ENCODE measurements at regions of chr7 and their contacts with region 1.

Region 1: GRCh38 chr7:152463709-152464311 is 28.0 kb upstream of the KMT2C start:
- DNase-seq: peak; percentile 94 to 100
- H3K4me3 ChIP-seq: peak overlapping the region; percentile 84
- H3K27ac ChIP-seq: peak overlapping the region; percentile 64
- H3K4me1 ChIP-seq: peaks cover 15% of the 10 kb centered on the region
- H3K27me3 ChIP-seq: no peaks in the 10 kb centered on the region
- CTCF ChIP-seq: no peak

Region 2: GRCh38 chr7:152436111-152436930 is 27.5 kb before region 1 on chr7:
- CTCF ChIA-PET with region 1: no interaction called
- POLR2A ChIA-PET with region 1: no interaction called
- intact Hi-C with region 1: loop called (anchors 1 kb)
- DNase-seq: peak; percentile 75 to 96
- H3K4me3 ChIP-seq: peak overlapping the region; percentile 67
- H3K27ac ChIP-seq: peak overlapping the region; percentile 50
- H3K4me1 ChIP-seq: peaks cover 26% of the 10 kb centered on the region
- H3K27me3 ChIP-seq: no peaks in the 10 kb centered on the region
- CTCF ChIP-seq: no peak

Region 3: GRCh38 chr7:152504367-152504766 is 40.6 kb after region 1 on chr7:
- CTCF ChIA-PET with region 1: no interaction called
- POLR2A ChIA-PET with region 1: no interaction called
- intact Hi-C with region 1: no loop called
- DNase-seq: peak; percentile 74 to 82
- H3K4me3 ChIP-seq: no peak overlapping the region
- H3K27ac ChIP-seq: peak overlapping the region; percentile 79
- H3K4me1 ChIP-seq: peaks cover 27% of the 10 kb centered on the region
- H3K27me3 ChIP-seq: no peaks in the 10 kb centered on the region
- CTCF ChIP-seq: no peak

Region 4: GRCh38 chr7:152543799-152544198 is 80.0 kb after region 1 on chr7:
- CTCF ChIA-PET with region 1: no interaction called
- POLR2A ChIA-PET with region 1: no interaction called
- intact Hi-C with region 1: loop called (anchors 1 kb)
- DNase-seq: no peak
- H3K4me3 ChIP-seq: no peak overlapping the region
- H3K27ac ChIP-seq: no peak overlapping the region
- H3K4me1 ChIP-seq: peaks cover 12% of the 10 kb centered on the region
- H3K27me3 ChIP-seq: no peaks in the 10 kb centered on the region
- CTCF ChIP-seq: no peak

Region 5: GRCh38 chr7:152588350-152588749 is 124.5 kb after region 1 on chr7:
- CTCF ChIA-PET with region 1: no interaction called
- POLR2A ChIA-PET with region 1: no interaction called
- intact Hi-C with region 1: loop called (anchors 2 kb)
- DNase-seq: peak; percentile 61 to 88
- H3K4me3 ChIP-seq: no peak overlapping the region
- H3K27ac ChIP-seq: no peak overlapping the region
- H3K4me1 ChIP-seq: peaks cover 14% of the 10 kb centered on the region
- H3K27me3 ChIP-seq: no peaks in the 10 kb centered on the region
- CTCF ChIP-seq: no peak

Region 6: DNA sequence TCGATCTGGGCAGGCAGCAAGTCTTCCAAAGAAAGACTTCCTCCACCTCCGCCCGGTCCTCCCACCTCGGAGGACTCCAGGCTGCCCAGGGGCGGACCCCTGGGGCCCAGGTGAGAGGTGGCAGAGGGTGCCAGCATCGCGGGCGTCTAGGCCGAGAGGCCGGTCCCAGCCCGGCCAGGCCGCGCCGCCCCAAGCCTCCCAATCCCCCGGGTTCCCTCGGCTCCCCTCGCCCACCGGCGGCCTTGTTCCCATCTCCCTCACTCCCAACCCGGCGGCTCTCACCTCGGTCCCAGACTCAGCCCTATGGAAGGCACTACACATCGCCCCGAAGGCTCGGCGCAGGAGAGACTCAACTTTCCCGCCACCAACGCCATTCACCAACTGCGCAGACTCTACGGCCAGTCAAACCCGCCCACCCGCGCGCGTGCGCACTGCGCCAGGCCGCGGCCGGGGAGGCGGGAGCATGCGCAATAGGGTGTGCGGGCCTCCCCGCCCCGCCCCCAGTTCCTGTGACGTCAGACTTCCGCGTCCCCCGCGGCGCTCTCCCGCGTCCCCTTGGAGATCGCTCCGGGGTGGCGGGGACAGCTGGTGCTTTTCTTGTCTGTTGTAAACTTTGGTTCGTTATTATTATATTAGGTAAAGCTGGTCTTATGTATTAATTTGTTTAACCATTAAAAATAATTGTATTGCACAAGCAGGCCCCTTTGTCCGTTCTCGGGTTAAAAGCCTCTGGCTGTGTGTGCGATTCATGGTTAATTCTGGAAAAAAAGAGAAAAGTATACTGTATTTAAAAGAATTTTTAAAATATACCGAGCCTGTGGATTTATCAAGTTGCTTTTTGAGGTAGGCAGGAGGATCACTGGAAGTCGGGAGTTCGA is 212.2 kb after region 1 on chr7 and contains the start of gene XRCC2:
- CTCF ChIA-PET with region 1: no interaction called
- POLR2A ChIA-PET with region 1: no interaction called
- intact Hi-C with region 1: loop called (anchors 1 kb)
- DNase-seq: peak; percentile 76 to 97
- H3K4me3 ChIP-seq: peak within 1 kb of the TSS; percentile 93
- H3K27ac ChIP-seq: peak within 1 kb of the TSS; percentile 60
- H3K4me1 ChIP-seq: peaks cover 24% of the 10 kb centered on the region
- H3K27me3 ChIP-seq: no peaks in the 10 kb centered on the region
- CTCF ChIP-seq: no peak
- total RNA-seq, gene XRCC2: 21.2 and 25.0 TPM in 2 replicates